ENCODE measurements at regions of chr9 and their contacts with region 1.

Region 1: DNA sequence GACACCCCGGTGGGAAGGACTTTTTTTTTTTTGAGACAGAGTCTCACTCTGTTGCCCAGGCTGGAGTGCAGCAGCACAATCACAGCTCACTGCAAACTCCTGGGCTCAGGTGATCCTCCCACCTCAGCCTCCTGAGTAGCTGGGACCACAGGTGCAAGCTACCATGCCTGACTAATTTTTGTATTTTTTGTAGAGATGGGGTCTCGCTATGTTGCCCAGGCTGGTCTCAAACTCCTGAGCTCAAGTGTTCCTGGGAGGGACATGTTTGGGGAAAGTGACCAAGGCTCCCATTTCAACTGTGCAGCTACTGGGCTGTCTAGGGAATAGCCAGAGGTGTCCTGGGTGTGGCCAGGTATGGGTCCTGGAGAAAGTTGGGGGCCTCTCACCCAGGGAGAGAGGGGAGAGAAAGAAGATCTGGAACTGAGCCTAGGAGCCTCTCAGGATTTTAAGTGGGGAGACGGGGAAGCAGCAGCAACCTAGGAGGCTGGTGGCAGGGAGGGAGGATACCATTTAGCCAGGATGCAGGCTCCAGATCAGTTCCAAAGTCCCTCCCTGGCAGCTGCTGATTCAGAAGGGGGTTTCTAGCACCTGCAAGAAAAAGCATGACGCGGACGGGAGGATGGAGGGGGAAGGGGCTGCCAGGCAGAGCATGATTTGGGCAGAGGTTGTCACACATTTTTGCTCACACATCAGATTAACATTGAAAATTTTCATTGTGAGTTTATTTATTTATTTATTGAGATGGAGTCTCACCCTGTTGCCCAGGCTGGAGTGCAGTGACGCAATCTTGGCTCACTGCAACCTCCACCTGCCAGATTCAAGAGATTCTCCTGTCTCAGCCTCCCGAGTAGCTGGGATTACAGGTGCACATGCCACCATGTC is 6.7 kb upstream of the TOR1B start:
- DNase-seq: no peak
- ATAC-seq: no peak
- H3K4me3 ChIP-seq: no peak overlapping the region
- H3K27ac ChIP-seq: no peak overlapping the region
- H3K4me1 ChIP-seq: no peaks in the 10 kb centered on the region
- H3K27me3 ChIP-seq: peaks cover 0 to 16% of the 10 kb centered on the region in 2 donors
- CTCF ChIP-seq: no peak

Region 2: DNA sequence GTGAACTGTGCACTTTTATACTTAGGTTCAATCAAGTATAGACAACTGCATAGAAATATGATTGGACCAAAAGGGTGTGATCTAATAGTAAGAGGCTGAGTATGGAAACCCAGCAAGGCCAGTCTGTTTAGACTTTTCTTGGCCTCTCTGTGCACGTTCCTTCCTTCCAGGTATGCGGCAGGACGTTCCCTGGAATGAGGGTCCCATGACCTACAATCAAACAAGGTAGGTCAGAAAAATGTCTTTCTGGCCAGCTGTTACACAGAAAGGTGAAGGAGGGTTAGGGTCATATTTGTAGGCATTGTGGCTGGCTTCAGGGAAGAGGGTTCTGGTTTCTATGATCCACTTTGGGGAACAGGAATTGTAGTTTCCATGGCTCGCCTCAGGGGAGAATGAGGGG is 260.2 kb before region 1 on chr9:
- intact Hi-C with region 1: no loop called
- DNase-seq: no peak
- ATAC-seq: no peak
- H3K4me3 ChIP-seq: no peak overlapping the region
- H3K27ac ChIP-seq: no peak overlapping the region
- H3K4me1 ChIP-seq: no peaks in the 10 kb centered on the region
- H3K27me3 ChIP-seq: no peaks in the 10 kb centered on the region
- CTCF ChIP-seq: no peak

Region 3: DNA sequence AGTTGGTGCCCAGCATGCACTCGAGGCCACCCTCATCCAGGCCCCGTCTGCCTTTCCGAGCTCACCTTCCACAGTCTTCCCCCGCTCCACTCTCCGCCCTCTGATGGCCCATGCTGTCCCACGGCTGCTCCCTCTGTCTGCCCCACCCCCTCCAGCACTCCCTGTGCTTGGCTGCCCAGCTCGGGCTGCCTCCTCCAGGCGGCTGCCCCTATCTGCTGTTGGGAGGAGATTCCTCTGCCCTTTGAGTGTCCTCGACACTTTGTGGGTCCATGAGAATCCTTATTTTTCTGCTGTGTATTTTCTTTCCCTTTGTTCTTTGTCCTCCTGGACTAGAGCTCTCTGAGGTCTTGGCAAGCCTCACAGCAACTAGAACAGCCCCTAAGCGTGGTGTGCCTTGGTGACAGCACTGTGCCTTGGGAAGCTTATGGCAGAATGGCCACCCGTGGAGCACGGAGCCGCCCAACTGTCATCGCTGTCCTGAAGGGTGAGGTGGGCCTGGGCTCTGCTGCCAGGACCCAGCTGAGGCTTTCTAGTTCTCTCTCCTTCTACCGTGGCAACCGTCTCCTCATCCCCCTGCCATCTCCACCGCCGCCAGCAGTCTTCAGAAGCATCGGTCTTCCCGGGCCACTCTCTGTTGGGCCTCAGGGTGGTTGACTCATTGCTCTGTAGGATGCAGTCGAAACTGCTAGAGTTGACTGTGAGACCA is 165.2 kb before region 1 on chr9:
- intact Hi-C with region 1: loop called in 1 of 2 experiments (anchors 10 kb)
- DNase-seq: peak in 1 of 4 donors; percentile 47
- ATAC-seq: no peak
- H3K4me3 ChIP-seq: no peak overlapping the region
- H3K27ac ChIP-seq: no peak overlapping the region
- H3K4me1 ChIP-seq: peaks cover 14 to 48% of the 10 kb centered on the region in 2 donors
- H3K27me3 ChIP-seq: no peaks in the 10 kb centered on the region
- CTCF ChIP-seq: no peak

Region 4: GRCh38 chr9:130088051-130088450 is 291.8 kb after region 1 on chr9:
- intact Hi-C with region 1: no loop called
- DNase-seq: no peak
- ATAC-seq: no peak
- H3K4me3 ChIP-seq: no peak overlapping the region
- H3K27ac ChIP-seq: no peak overlapping the region
- H3K4me1 ChIP-seq: no peaks in the 10 kb centered on the region
- H3K27me3 ChIP-seq: no peaks in the 10 kb centered on the region
- CTCF ChIP-seq: no peak

Measured in left lung (tissue), 14 donors.